ENCODE measurements at regions of chr12 and their contacts with region 1.

Region 1: GRCh38 chr12:7884689-7885088 is 12.0 kb upstream of the SLC2A14 start:
- DNase-seq: no peak
- ATAC-seq: no peak
- H3K4me3 Mint-ChIP-seq: no peak overlapping the region
- H3K27ac Mint-ChIP-seq: no peak overlapping the region; the same call in 1 of the 2 replicates
- H3K4me1 Mint-ChIP-seq: peaks cover 31% of the 10 kb centered on the region
- H3K27me3 Mint-ChIP-seq: no peaks in the 10 kb centered on the region
- CTCF ChIP-seq: no peak

Region 2: GRCh38 chr12:7872566-7873319 is 11.9 kb before region 1 on chr12 and contains the start of gene SLC2A14:
- CTCF ChIA-PET with region 1: interaction called, 3 read pairs
- POLR2A ChIA-PET with region 1: interaction called, 10 read pairs
- DNase-seq: peak; percentile 52
- ATAC-seq: peak; percentile 62
- H3K4me3 Mint-ChIP-seq: peak within 1 kb of the TSS; percentile 55
- H3K27ac Mint-ChIP-seq: peak within 1 kb of the TSS; percentile 74
- H3K4me1 Mint-ChIP-seq: peaks cover 16% of the 10 kb centered on the region
- H3K27me3 Mint-ChIP-seq: no peaks in the 10 kb centered on the region
- CTCF ChIP-seq: no peak
- total RNA-seq, gene SLC2A14: 24.4 to 28.8 TPM (median 26.7 TPM) in 3 replicates

Region 3: DNA sequence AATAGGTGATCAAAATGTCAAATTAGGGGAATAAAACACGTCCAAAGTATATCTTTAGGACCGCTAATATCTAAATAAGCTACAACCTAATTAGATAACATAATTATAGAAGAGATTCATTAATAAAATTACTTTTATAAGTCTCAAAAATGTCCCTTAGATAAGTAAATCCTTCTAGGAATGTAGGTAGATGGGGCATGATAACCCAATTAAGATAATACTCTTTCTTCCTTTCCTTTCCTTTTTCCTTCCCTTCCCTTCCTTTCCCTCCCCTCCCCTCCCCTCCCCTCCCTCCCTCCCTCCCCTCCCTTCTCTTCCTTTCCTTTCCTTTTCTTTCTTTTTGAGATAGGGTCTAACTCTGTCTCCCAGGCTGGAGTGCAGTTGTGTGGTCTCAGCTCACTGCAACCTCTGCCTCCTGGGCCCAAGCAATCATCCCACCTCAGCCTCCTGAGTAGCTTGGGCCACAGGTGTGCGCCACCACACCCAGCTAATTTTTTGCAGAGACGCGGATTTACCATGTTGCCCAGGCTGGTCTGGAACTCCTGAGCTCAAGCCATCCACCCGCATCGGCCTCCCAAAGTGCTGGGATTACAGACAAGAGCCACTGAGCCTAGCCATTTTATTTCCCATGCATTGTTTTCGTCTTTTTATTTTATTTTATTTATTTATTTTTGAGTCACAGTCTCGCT is 62.5 kb after region 1 on chr12:
- CTCF ChIA-PET with region 1: no interaction called
- POLR2A ChIA-PET with region 1: no interaction called
- DNase-seq: peak; percentile 2
- ATAC-seq: no peak
- H3K4me3 Mint-ChIP-seq: no peak overlapping the region
- H3K27ac Mint-ChIP-seq: no peak overlapping the region
- H3K4me1 Mint-ChIP-seq: peaks cover 7% of the 10 kb centered on the region
- H3K27me3 Mint-ChIP-seq: no peaks in the 10 kb centered on the region
- CTCF ChIP-seq: no peak

Measured in WTC11 (cell line).